Psoas muscle (tissue), 8 donors: ENCODE measurements at regions of chr10 and their contacts with region 1.

Region 1: DNA sequence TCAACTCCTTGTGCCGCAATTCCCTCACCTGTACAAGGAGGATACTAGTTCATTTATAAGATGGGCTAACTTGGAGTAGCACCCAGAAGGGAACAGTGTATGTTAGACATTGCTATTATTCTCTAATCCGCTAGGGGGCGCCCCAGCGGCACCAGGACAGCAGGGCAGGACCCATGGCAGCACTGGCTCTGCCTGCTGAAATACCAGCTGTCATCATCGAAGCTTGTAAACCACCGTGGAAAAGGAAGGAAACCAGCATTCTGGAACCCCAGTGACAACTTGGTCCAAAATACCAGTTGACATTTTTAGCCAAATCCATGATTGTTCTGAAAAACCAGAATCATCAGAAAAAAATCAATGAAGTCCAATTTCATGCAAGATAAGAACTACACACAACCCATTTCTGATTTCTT is 134.4 kb downstream of the ITGA8 start:
- DNase-seq: peak; percentile 39 to 58
- ATAC-seq: peak in 2 of 4 donors; percentile 54 to 61
- H3K4me3 ChIP-seq: no peak overlapping the region
- H3K27ac ChIP-seq: no peak overlapping the region
- H3K4me1 ChIP-seq: no peaks in the 10 kb centered on the region
- H3K27me3 ChIP-seq: no peaks in the 10 kb centered on the region
- CTCF ChIP-seq: peak; percentile 54

Region 2: DNA sequence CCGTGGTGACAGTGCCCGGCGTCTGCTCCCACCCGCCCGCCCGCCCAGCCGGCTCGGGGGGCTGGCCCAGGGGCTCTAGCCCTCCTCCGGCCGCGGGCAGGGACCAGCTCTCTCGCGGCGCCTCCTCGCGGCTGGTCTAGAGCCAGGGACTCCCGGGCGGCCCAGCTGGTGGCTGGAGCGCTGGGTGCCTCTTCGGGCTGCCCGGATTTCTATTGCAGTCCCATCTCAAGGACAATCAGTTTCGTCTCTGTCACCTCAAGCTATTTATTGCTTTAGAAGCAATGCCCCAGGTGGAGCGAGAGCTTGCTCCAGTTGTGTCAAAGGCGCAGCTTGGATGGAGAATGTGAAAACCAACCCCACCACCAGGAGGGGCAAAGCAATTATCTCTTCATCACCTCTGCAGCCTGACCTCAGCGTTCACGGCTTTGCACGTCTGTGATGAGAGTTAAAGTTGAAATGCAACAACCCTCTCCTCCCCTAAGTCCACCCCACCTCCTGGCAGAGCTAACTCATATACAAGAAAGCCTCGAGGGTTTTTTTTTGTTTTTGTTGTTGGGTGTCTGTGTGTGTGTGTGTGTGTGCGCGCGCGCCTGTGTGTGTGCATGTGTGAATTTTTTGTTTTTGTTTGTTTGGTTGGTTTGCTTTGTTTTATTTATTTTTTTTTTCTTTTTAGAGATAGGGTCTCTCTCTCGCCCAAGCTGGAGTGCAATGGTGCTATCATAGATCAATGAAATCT is 134.8 kb after region 1 on chr10 and contains the start of gene ITGA8:
- intact Hi-C with region 1: loop called in 1 of 2 experiments (anchors 10 kb)
- DNase-seq: peak in 1 of 2 donors; percentile 55
- ATAC-seq: peak in 2 of 4 donors; percentile 67 to 74
- H3K4me3 ChIP-seq: peak within 1 kb of the TSS; percentile 62
- H3K27ac ChIP-seq: no peak within 1 kb of the TSS
- H3K4me1 ChIP-seq: no peaks in the 10 kb centered on the region
- H3K27me3 ChIP-seq: peaks cover 0 to 33% (median 0%) of the 10 kb centered on the region in 3 donors
- CTCF ChIP-seq: peak; percentile 23
- total RNA-seq, gene ITGA8: 0.47 to 2.0 (median 1.4) TPM